Sigmoid colon (tissue), 7 donors: ENCODE measurements at regions of chr6 and their contacts with region 1.

Region 1: GRCh38 chr6:3929281-3929798 is 80.2 kb downstream of the FAM50B start:
- DNase-seq: peak; percentile 75
- H3K4me3 ChIP-seq: no peak overlapping the region
- H3K27ac ChIP-seq: peak overlapping the region; percentile 39 to 75 (median 66)
- H3K4me1 ChIP-seq: peaks cover 0 to 33% (median 18%) of the 10 kb centered on the region in 4 donors
- H3K27me3 ChIP-seq: no peaks in the 10 kb centered on the region
- CTCF ChIP-seq: no peak
- EP300 ChIP-seq: peak in 1 of 4 donors; percentile 27
- POLR2A ChIP-seq: no peak

Region 2: DNA sequence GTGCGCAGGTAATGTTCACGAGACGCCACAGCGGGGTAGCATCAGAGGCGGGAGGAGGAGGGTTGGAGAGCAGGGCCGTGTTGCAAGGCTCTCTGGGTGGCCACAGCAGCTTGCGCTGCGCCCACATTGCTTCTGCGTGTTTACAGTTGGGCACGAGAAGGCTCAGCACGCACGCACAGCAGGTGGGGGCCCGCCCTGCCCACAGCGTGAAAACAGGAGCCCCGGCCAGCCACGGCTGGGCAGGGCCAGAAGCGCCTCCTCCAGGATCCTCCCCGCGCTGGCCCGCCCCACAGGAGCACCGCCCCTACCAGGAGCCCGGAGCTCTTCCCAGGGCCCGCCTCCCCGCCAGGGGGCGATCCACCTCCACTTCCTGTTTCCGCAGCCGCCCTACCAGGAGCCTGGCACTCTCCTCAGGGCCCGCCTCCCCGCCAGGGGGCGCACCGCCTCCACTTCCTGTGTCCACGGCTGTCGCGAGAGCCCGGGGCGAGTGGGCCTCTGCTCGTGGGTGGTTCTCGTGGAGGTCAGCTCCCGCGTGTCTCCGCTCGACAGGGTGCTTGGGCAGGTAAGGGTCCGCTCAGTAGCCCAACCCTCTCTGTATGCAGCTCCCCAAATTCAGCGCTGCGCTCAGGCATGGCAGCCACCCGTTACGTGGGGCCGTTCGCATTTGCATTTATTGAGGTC is 80.3 kb before region 1 on chr6 and contains the start of gene FAM50B:
- intact Hi-C with region 1: loop called (anchors 1 kb)
- DNase-seq: peak; percentile 96
- H3K4me3 ChIP-seq: peak within 1 kb of the TSS; percentile 39 to 55 (median 49)
- H3K27ac ChIP-seq: peak within 1 kb of the TSS; percentile 67 to 80 (median 73)
- H3K4me1 ChIP-seq: peaks cover 0 to 25% (median 8%) of the 10 kb centered on the region in 4 donors
- H3K27me3 ChIP-seq: no peaks in the 10 kb centered on the region
- CTCF ChIP-seq: peak; percentile 83 to 99 (median 96)
- EP300 ChIP-seq: no peak
- POLR2A ChIP-seq: no peak
- total RNA-seq, gene FAM50B: 9.6 to 16.1 (median 13.3) TPM